ENCODE measurements at regions of chr2 and their contacts with region 1.

Region 1: GRCh38 chr2:83633423-83633822 is 825.7 kb downstream of the SUCLG1 start:
- DNase-seq: no peak
- ATAC-seq: no peak
- H3K4me3 ChIP-seq: no peak overlapping the region
- H3K27ac ChIP-seq: no peak overlapping the region
- H3K4me1 ChIP-seq: no peaks in the 10 kb centered on the region
- H3K27me3 ChIP-seq: no peaks in the 10 kb centered on the region
- CTCF ChIP-seq: no peak
- POLR2A ChIP-seq: no peak
- RAD21 ChIP-seq: no peak

Region 2: DNA sequence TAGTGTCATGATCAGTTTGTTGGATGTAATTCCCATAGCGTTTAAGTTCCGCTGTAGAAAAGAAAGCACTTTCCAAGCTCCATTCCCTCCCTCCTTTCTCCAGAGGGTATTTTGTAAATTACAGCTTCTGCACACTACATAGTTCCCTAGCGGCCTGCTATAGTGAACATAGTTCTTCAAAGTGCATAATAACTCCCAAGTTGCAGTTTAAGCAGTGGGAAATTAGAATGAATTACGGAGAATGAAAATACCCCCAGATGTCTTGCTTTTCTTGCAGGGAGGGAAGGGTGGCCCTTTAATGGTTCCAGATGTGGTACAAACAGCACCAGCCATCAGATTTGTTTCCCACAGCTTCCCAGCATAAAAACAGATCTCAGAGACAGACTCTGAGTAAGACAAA is 68.3 kb before region 1 on chr2:
- CTCF ChIA-PET with region 1: no interaction called
- POLR2A ChIA-PET with region 1: no interaction called
- dilution Hi-C with region 1: no loop called
- in situ Hi-C with region 1: no loop called
- intact Hi-C with region 1: loop called (anchors 10 kb)
- DNase-seq: no peak
- ATAC-seq: no peak
- H3K4me3 ChIP-seq: no peak overlapping the region
- H3K27ac ChIP-seq: no peak overlapping the region
- H3K4me1 ChIP-seq: no peaks in the 10 kb centered on the region
- H3K27me3 ChIP-seq: no peaks in the 10 kb centered on the region
- CTCF ChIP-seq: no peak
- POLR2A ChIP-seq: no peak
- RAD21 ChIP-seq: no peak